Activated T-helper 1 cell treated with anti-CD3 and anti-CD28 coated beads, Interleukin-12 subunit alpha, Interleukin-12 subunit beta, Interleukin-2, Interleukin-4 antibody, amounts not matched to agents 30 ng/mL and 10 ng/mL and 1 ng/mL, durations not matched to agents 14 hours and 24 hours and 36 hours (primary cell): ENCODE measurements at regions of chr2 and their contacts with region 1.

Region 1: DNA sequence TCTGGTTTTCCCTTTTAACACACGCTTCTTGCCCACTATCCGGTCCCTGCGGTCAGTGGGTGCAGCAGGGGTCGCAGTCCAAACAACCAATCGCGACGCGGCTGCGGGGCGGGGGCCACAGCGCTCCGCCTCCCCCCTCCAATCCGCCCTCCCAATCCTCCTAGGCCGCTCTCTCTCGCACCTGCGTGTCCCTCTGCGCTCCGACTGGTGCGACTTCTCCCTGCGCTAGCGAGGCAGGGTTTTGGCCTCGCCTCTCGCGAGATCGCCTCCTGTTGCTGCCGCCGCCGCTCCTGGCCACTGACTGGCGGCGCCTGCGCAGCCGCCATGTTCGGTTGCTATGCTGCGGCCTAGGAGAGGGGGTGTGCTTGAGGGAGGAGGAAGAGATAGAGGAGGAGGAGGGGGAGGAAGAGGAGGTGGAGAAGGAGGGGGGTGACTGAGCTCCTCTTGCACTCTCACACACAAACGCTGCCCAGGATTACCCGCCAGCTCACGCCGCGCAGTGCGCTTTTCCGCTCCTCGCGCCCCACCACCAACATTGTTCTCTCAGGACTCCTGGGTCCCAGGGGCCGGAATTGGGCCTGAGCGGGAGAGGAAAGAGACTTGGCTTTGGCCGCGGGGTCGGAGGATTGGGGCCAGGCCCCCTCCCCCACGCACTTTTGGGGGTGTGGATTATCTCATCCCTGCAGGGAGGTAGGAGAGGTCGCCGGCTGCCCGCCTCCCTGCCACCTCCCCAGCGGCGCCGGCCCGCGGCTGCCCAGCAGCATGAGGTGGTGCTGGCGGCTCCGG is at the start of gene PTPN4:
- DNase-seq: peak; percentile 95
- H3K4me3 Mint-ChIP-seq: peak within 1 kb of the TSS; percentile 90
- H3K27ac Mint-ChIP-seq: peak within 1 kb of the TSS; percentile 94
- H3K4me1 Mint-ChIP-seq: peaks cover 53% of the 10 kb centered on the region
- H3K27me3 Mint-ChIP-seq: peaks cover 3% of the 10 kb centered on the region
- total RNA-seq, gene PTPN4: 24.5 and 28.3 TPM in 2 replicates

Region 2: GRCh38 chr2:117814417-117815264 is 1945.0 kb before region 1 on chr2 and contains the start of gene DDX18:
- intact Hi-C with region 1: loop called (anchors 10 kb)
- DNase-seq: peak; percentile 96
- H3K4me3 Mint-ChIP-seq: peak within 1 kb of the TSS; percentile 90
- H3K27ac Mint-ChIP-seq: peak within 1 kb of the TSS; percentile 94
- H3K4me1 Mint-ChIP-seq: peaks cover 40% of the 10 kb centered on the region
- H3K27me3 Mint-ChIP-seq: peaks cover 3% of the 10 kb centered on the region
- total RNA-seq, gene DDX18: 133 and 143 TPM in 2 replicates

Region 3: DNA sequence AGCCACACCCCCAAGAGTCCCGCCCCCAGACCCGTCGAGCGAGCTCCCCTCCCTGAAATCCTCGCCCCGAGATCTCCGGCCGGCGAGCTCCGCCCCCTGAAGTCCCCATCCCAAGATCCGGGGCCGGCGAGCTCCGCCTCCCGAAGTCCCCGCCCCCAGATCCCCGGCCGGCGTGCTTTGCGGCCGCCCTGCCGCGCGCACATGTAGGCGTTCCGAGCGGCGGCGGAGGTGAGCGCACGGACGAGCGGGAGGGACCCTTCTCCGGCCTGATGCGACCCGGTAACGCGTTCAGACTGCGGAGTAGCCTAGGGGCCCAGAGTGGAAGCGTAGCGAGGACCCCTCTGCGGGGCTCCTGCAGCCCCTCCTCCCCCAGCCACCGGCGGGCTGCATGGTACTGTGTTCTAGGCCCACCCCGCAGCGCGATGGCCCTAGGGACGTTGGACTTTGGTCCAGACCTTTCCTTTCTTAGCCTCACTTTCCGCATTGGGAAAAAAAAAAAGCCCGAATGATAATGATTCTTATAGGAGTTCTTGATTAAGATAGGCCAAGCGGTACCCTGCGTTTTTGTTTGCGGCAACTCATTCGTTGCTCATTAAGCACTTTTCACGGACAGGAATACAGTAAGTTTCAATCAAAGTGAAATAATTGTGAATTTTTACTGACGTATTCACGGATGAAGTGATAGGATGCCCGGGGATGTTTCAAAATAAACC is 80.5 kb before region 1 on chr2 and contains the start of gene TMEM177:
- intact Hi-C with region 1: loop called (anchors 1 kb)
- DNase-seq: peak; percentile 90
- H3K4me3 Mint-ChIP-seq: peak within 1 kb of the TSS; percentile 96
- H3K27ac Mint-ChIP-seq: peak within 1 kb of the TSS; percentile 85
- H3K4me1 Mint-ChIP-seq: peaks cover 25% of the 10 kb centered on the region
- H3K27me3 Mint-ChIP-seq: peaks cover 4% of the 10 kb centered on the region
- total RNA-seq, gene TMEM177: 16.6 and 17.4 TPM in 2 replicates

Region 4: GRCh38 chr2:119862127-119862889 is 102.7 kb after region 1 on chr2:
- intact Hi-C with region 1: loop called (anchors 1 kb)
- DNase-seq: no peak
- H3K4me3 Mint-ChIP-seq: peak overlapping the region; percentile 34
- H3K27ac Mint-ChIP-seq: peak overlapping the region; percentile 74
- H3K4me1 Mint-ChIP-seq: peaks cover 43% of the 10 kb centered on the region
- H3K27me3 Mint-ChIP-seq: peaks cover 3% of the 10 kb centered on the region

Region 5: DNA sequence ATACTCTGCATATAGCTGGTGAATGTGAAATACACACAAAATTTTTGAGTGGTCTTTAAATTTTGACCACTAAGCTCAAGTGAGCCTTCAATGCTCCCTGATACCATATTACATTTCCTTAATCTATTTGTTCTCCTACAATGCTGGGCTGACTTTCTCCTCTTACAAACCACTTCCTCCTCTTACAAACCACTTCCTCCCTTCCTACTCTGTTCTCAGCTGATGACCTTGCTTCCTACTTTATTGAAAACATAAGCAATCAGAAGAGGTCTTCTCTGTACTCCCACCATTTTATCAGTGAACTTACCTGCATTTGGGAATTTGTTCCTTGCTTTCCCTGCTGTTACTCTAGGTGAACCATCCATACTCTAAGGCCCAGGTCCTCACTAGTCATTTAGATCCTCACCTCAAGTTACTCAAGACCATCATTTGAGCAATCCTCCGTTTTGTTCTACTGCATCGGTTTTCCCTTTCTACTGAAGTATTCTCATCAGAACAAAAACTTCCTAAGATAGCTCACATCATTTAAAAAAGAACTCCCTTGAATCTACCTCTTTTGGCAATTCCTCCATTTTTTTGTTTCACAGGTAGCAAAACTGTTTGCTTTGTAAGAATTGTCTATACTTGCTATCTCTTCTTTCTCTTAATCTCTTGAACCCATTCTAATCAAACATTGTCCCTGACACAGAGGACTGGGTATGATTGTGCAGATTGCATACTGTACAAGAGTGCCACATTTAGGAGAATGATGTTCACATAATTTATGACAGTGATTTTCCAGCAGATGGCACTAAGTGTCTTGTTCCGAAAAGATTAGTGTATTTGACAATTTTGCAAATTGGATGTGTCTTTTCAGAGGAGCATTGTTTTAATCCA is 349.8 kb after region 1 on chr2:
- intact Hi-C with region 1: loop called (anchors 5 kb)
- DNase-seq: peak; percentile 13
- H3K4me3 Mint-ChIP-seq: peak overlapping the region; percentile 29
- H3K27ac Mint-ChIP-seq: no peak overlapping the region
- H3K4me1 Mint-ChIP-seq: peaks cover 16% of the 10 kb centered on the region
- H3K27me3 Mint-ChIP-seq: peaks cover 14% of the 10 kb centered on the region

Region 6: DNA sequence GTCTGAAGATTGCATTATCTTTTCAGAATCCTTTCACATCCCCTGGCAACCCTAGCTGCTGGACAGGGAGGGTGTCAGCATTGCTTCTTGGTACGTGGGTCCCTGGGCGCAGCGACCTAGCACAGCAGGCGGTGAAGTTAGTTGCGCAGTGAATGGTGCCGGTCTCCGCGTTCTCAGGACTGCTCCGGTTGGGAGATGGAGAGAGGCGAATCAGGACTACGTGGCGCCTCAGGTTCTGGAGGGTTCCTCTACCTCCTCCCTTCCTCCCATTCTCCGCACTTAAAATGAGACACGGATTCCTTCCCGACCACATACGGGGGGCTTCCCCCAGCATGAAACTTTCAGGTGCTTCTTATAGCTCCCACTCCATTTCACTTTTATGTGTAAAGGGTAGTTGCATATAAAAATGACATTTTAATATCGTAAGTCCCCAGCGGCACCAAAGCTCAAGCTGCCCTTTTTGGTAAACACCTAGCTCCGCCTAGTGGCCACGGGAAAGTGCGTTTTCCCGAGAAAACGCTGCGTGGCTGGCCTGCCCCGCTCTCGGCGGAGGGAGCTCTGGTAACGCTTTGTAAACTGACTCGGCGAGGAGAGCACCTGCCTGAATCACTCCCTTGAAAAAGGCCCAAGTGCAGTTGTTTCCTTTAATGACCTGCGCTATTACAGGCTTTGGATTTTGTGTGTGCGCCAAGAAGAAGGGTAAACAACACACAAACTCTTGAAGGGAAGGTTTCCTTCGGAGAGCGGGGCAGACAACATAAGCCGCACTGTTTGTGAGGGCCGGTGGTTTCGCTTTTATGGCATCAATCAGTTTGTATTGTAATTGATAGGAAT is 553.4 kb after region 1 on chr2:
- intact Hi-C with region 1: loop called (anchors 5 kb)
- DNase-seq: peak; percentile 64
- H3K4me3 Mint-ChIP-seq: peak overlapping the region; percentile 77
- H3K27ac Mint-ChIP-seq: peak overlapping the region; percentile 4
- H3K4me1 Mint-ChIP-seq: peaks cover 42% of the 10 kb centered on the region
- H3K27me3 Mint-ChIP-seq: peaks cover under 1% of the 10 kb centered on the region